Breast epithelium (tissue), 4 donors: ENCODE measurements at regions of chr3 and their contacts with region 1.

Region 1: GRCh38 chr3:22161315-22161714 is 410.3 kb upstream of the ZNF385D start:
- DNase-seq: no peak
- H3K4me3 ChIP-seq: no peak overlapping the region
- H3K27ac ChIP-seq: no peak overlapping the region
- H3K4me1 ChIP-seq: no peaks in the 10 kb centered on the region
- H3K27me3 ChIP-seq: no peaks in the 10 kb centered on the region
- CTCF ChIP-seq: no peak
- POLR2A ChIP-seq: no peak

Region 2: DNA sequence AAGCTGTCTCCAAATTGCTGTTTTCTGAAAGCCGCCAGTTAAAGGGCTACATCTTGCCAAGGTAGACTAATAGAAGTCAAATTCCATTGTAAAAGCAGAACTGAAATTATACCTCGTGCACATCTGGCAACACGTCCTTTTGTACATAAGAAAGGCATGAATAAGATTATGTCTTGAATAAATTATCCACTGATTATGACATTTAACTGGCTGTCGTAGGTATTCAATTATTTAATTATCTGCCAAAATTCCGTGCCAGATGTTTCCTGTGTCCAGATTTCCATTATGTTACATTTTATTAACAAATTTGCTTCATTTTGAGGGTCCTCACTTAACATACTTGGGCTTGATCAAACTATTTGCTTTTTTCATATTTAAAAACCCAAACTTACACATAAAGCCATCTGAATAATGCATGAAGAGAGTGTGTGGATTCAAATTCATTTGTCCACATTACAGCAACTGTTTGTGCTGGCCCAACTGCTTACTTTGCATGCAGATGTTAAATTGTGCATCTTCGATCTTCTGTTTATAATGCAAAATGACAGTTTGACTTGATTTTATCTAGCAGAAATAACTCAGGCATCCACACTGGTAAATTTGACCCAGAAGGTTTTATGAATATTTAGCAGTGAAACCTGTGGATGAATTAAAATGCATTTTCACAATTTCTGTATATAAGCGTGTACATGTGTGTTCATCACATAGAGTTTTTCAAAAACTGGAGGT is 1111.8 kb before region 1 on chr3:
- intact Hi-C with region 1: loop called (anchors 5 kb)
- DNase-seq: no peak
- H3K4me3 ChIP-seq: no peak overlapping the region
- H3K27ac ChIP-seq: no peak overlapping the region
- H3K4me1 ChIP-seq: no peaks in the 10 kb centered on the region
- H3K27me3 ChIP-seq: no peaks in the 10 kb centered on the region
- CTCF ChIP-seq: no peak
- POLR2A ChIP-seq: no peak

Region 3: GRCh38 chr3:22122567-22122966 is 38.7 kb before region 1 on chr3:
- intact Hi-C with region 1: no loop called
- DNase-seq: no peak
- H3K4me3 ChIP-seq: no peak overlapping the region
- H3K27ac ChIP-seq: no peak overlapping the region
- H3K4me1 ChIP-seq: no peaks in the 10 kb centered on the region
- H3K27me3 ChIP-seq: no peaks in the 10 kb centered on the region
- CTCF ChIP-seq: no peak
- POLR2A ChIP-seq: no peak

Region 4: GRCh38 chr3:22175947-22176346 is 14.6 kb after region 1 on chr3:
- intact Hi-C with region 1: no loop called
- DNase-seq: no peak
- H3K4me3 ChIP-seq: no peak overlapping the region
- H3K27ac ChIP-seq: no peak overlapping the region
- H3K4me1 ChIP-seq: no peaks in the 10 kb centered on the region
- H3K27me3 ChIP-seq: no peaks in the 10 kb centered on the region
- CTCF ChIP-seq: no peak
- POLR2A ChIP-seq: no peak